Mammary epithelial cell (primary cell): ENCODE measurements at regions of chr13 and their contacts with region 1.

Region 1: GRCh38 chr13:75666646-75667351 is 30.7 kb downstream of the LMO7 start:
- DNase-seq: peak; percentile 90
- H3K4me3 ChIP-seq: peak overlapping the region in 1 of 3 experiments; percentile 4
- H3K27ac ChIP-seq: peak overlapping the region; percentile 55
- H3K4me1 ChIP-seq: peaks cover 6% of the 10 kb centered on the region
- H3K27me3 ChIP-seq: no peaks in the 10 kb centered on the region
- CTCF ChIP-seq: no peak

Region 2: GRCh38 chr13:75514080-75514995 is 152.5 kb before region 1 on chr13:
- CTCF ChIA-PET with region 1: no interaction called
- dilution Hi-C with region 1: no loop called
- in situ Hi-C with region 1: no loop called
- intact Hi-C with region 1: no loop called
- DNase-seq: no peak
- H3K4me3 ChIP-seq: no peak overlapping the region
- H3K27ac ChIP-seq: no peak overlapping the region
- H3K4me1 ChIP-seq: no peaks in the 10 kb centered on the region
- H3K27me3 ChIP-seq: no peaks in the 10 kb centered on the region
- CTCF ChIP-seq: no peak

Region 3: GRCh38 chr13:75566658-75567057 is 100.1 kb before region 1 on chr13:
- CTCF ChIA-PET with region 1: no interaction called
- dilution Hi-C with region 1: no loop called
- in situ Hi-C with region 1: no loop called
- intact Hi-C with region 1: loop called (anchors 5 kb)
- DNase-seq: peak; percentile 35
- H3K4me3 ChIP-seq: no peak overlapping the region
- H3K27ac ChIP-seq: no peak overlapping the region
- H3K4me1 ChIP-seq: peaks cover 17% of the 10 kb centered on the region
- H3K27me3 ChIP-seq: no peaks in the 10 kb centered on the region
- CTCF ChIP-seq: peak; percentile 25 to 44

Region 4: GRCh38 chr13:75607451-75607850 is 59.3 kb before region 1 on chr13:
- CTCF ChIA-PET with region 1: no interaction called
- dilution Hi-C with region 1: no loop called
- in situ Hi-C with region 1: no loop called
- intact Hi-C with region 1: no loop called
- DNase-seq: peak; percentile 79
- H3K4me3 ChIP-seq: no peak overlapping the region
- H3K27ac ChIP-seq: no peak overlapping the region
- H3K4me1 ChIP-seq: peaks cover 10% of the 10 kb centered on the region
- H3K27me3 ChIP-seq: no peaks in the 10 kb centered on the region
- CTCF ChIP-seq: no peak